Left cardiac atrium (tissue), 4 donors: ENCODE measurements at regions of chr6 and their contacts with region 1.

Region 1: DNA sequence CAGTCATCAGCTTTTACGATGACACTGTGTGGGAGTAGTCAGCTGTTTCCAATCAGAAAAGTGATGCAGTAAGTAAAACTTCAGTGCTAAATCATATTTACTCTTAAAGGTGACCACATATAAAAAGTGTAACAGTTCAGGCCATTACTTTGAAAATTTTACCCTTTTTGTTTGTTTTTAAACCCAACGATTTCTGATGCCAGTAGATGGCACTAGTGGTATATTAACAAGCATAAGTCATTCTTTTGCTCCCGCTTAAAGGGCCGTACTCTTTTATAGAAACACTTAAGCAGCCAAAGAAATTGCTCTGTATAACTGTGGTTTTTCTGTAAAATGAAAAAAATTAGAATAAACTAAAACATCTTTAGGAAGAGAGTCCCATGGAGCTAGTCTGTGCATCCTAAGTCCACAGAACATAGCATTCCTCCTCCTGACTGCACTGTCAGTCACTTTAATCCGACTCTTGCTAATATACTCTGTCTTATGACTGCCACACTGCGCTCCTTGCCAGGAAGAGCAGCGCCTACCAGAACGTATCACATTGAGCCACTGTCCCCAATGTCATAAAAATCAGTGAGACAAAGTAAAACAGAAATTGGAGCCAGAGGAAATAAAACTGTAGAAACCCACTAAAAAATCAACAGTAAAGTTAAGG is 25.0 kb downstream of the HEBP2 start:
- DNase-seq: no peak
- ATAC-seq: peak; percentile 32 to 40

Region 2: DNA sequence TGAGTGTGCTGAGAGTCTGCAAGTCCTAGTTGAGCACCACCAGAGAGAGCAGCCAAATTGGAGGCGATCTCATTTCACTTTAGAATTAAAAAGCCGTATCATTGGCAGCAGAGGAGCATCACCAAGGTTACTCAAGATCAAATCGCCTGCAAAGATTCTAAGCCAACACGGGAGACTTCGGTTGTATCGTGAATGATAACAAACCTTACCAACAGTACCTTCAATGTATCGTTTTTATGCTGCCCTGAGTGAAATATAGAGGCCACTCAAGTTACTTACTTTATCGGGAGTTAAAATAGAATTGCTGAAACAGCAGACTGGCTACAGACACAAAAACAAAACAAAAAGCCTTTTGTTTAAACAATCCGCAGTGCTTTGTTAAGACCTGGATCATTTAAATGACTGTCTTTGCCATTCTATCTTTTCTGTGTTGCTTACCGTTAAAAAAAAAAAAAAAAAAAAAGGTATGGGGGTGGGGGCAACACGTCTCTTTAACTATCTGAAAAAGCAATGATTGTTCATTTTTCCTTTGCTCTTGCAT is 56.0 kb after region 1 on chr6:
- intact Hi-C with region 1: loop called in 1 of 2 experiments (anchors 10 kb)
- DNase-seq: no peak
- ATAC-seq: peak; percentile 27 to 39

Region 3: DNA sequence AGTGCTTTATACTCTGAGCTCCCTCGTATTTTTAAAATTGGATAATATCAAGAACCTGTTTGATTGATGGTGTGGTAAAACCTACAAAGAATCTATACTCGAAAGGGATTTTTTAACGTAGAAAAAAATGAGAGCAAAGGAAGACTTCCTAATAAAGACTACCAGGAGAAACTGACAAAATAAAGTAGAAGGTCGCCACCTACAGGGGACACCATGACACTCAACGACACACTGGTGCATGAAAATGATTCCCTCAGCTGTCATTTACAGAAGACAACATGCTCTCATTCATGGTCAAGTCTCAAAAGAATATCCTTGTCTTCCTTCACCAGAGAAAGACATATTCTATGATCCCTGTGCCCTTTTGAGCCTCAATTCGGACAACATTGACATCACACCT is 80.3 kb after region 1 on chr6:
- intact Hi-C with region 1: loop called (anchors 5 to 10 kb)
- DNase-seq: peak; percentile 46
- ATAC-seq: peak in 1 of 2 donors; percentile 38

Region 4: DNA sequence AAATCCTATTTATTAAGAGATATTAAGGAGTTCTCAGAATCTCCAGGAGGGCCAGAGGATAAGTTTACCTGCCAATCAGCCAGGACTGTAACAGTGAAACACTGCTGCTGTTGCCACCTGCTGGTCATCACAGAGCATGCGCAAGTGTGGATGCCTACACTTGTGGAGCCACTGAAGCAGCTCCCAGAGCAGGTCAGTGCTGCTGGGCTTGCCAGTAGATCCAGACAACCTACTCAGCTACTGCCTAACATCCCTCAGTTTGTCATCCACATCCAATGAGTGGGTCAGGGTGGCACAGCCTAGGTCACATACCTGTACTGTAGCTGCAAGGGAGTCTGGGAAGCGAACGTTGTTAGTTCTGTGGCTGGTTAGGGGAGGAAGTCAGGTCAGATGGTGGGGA is 88.6 kb after region 1 on chr6:
- intact Hi-C with region 1: loop called in 1 of 2 experiments (anchors 10 kb)
- DNase-seq: no peak
- ATAC-seq: peak in 1 of 2 donors; percentile 41

Region 5: DNA sequence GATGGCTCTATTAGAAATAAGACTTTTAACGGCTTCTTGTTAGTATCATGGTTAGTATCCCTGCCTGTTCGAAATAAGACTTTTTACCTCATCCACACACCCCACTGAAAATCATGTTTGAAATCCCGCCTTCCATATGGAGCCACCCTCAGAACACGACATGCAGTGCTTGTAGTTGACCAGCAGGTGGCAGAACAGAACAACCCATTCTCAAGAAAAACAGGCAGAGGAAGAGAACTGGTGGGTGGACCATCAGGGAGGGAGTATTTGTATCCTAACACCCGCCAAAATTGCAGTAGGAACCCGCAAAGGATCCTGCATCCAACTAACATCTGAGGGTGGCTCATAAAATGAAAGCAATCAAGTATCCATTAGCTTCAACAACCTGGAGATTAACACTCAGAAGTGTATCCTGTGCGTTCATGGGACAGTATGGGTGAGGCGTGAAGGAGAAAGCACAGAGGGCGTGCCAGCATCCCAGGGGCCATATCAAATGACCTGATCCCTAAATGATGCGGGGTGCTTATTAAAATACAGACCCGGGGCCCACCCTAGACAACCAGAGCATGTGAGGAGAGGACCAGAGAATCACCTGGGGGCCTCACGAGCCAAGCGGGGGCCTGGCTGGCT is 159.8 kb after region 1 on chr6:
- intact Hi-C with region 1: loop called (anchors 1 to 10 kb)
- DNase-seq: peak; percentile 49
- ATAC-seq: peak; percentile 53 to 67

Region 6: GRCh38 chr6:138765896-138766655 is 337.0 kb after region 1 on chr6:
- intact Hi-C with region 1: loop called in 1 of 2 experiments (anchors 5 kb)
- DNase-seq: no peak
- ATAC-seq: no peak